ENCODE measurements at regions of chr19 and their contacts with region 1.

Region 1: GRCh38 chr19:860481-861101 is 1.1 kb downstream of the CFD start:
- DNase-seq: peak; percentile 62
- H3K4me3 Mint-ChIP-seq: no peak overlapping the region
- H3K27ac Mint-ChIP-seq: no peak overlapping the region
- H3K4me1 Mint-ChIP-seq: peaks cover 14% of the 10 kb centered on the region
- H3K27me3 Mint-ChIP-seq: peaks cover 8% of the 10 kb centered on the region

Region 2: GRCh38 chr19:771332-771785 is 89.2 kb before region 1 on chr19:
- CTCF ChIA-PET with region 1: interaction called, 5 read pairs
- POLR2A ChIA-PET with region 1: no interaction called
- intact Hi-C with region 1: loop called (anchors 2 kb)
- DNase-seq: peak; percentile 62
- H3K4me3 Mint-ChIP-seq: no peak overlapping the region
- H3K27ac Mint-ChIP-seq: no peak overlapping the region
- H3K4me1 Mint-ChIP-seq: peaks cover 3% of the 10 kb centered on the region
- H3K27me3 Mint-ChIP-seq: peaks cover 11% of the 10 kb centered on the region

Region 3: GRCh38 chr19:913080-913748 is 52.6 kb after region 1 on chr19 and contains the start of gene R3HDM4:
- CTCF ChIA-PET with region 1: interaction called, 33 read pairs
- POLR2A ChIA-PET with region 1: no interaction called
- intact Hi-C with region 1: loop called (anchors 1 kb)
- DNase-seq: peak; percentile 89
- H3K4me3 Mint-ChIP-seq: peak within 1 kb of the TSS; percentile 80
- H3K27ac Mint-ChIP-seq: peak within 1 kb of the TSS; percentile 92
- H3K4me1 Mint-ChIP-seq: peaks cover 31% of the 10 kb centered on the region
- H3K27me3 Mint-ChIP-seq: no peaks in the 10 kb centered on the region
- total RNA-seq, gene R3HDM4: 80.4 to 81.4 TPM

Region 4: GRCh38 chr19:920051-920864 is 59.7 kb after region 1 on chr19:
- CTCF ChIA-PET with region 1: interaction called, 33 read pairs
- POLR2A ChIA-PET with region 1: interaction called, 4 read pairs
- intact Hi-C with region 1: loop called (anchors 1 kb)
- DNase-seq: peak; percentile 78
- H3K4me3 Mint-ChIP-seq: peak overlapping the region; percentile 75
- H3K27ac Mint-ChIP-seq: peak overlapping the region; percentile 85
- H3K4me1 Mint-ChIP-seq: peaks cover 19% of the 10 kb centered on the region
- H3K27me3 Mint-ChIP-seq: no peaks in the 10 kb centered on the region

Region 5: DNA sequence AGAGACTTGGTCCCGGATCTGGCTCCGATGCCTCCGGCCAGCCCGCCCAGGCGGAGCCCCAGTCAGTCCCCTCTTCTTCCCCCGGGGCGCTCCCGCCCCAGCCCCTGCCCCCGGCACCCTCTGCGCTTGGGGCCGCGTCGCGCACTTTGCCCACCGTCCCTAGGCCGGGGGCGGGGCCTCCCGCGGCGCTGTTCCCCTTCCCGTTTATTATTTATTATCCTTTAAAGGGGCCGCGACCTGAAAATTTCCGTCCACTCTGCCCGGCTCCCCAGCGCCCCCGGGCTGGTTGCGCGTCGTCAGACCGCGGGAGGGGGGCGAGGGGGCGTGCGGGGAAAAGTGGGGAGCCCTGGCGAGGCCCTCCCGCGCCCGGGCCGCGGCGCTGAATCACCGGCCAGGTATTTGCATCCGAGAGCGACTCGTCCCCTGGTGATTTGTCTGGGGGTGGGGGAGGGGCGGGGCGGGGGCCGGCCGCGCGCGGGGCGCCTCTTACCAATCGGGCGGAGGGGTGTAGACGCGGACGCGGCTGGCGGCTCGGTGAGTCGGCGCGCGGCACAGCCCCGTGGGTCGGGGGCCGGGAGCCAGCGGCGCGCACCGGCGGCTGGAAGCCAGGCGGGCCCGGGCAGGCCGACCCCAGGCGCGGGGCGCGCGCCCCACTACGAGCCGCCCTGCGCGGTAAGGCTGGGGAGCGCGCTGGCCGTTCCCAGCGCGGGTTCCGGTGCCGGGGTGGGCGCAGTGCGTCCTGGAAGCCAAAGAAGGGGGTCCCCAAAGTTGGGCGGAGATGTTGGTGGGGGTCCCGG is 65.1 kb after region 1 on chr19 and contains the start of gene ARID3A:
- CTCF ChIA-PET with region 1: interaction called, 33 read pairs
- POLR2A ChIA-PET with region 1: interaction called, 4 read pairs
- intact Hi-C with region 1: loop called (anchors 1 kb)
- DNase-seq: peak; percentile 80
- H3K4me3 Mint-ChIP-seq: peak within 1 kb of the TSS; percentile 75
- H3K27ac Mint-ChIP-seq: peak within 1 kb of the TSS; percentile 71
- H3K4me1 Mint-ChIP-seq: peaks cover 12% of the 10 kb centered on the region
- H3K27me3 Mint-ChIP-seq: no peaks in the 10 kb centered on the region
- total RNA-seq, gene ARID3A: 28.5 to 30.6 TPM

Region 6: GRCh38 chr19:984165-984967 is 123.8 kb after region 1 on chr19 and contains the start of gene WDR18:
- CTCF ChIA-PET with region 1: interaction called, 20 read pairs
- POLR2A ChIA-PET with region 1: no interaction called
- intact Hi-C with region 1: loop called (anchors 5 kb)
- DNase-seq: peak; percentile 94
- H3K4me3 Mint-ChIP-seq: peak within 1 kb of the TSS; percentile 94
- H3K27ac Mint-ChIP-seq: peak within 1 kb of the TSS; percentile 90
- H3K4me1 Mint-ChIP-seq: peaks cover 20% of the 10 kb centered on the region
- H3K27me3 Mint-ChIP-seq: no peaks in the 10 kb centered on the region
- total RNA-seq, gene WDR18: 73.3 to 75.8 TPM

Measured in activated CD4-positive, alpha-beta memory T cell treated with anti-CD3 and anti-CD28 coated beads for 36 hours (primary cell).